ENCODE measurements at regions of chr1 and their contacts with region 1.

Region 1: DNA sequence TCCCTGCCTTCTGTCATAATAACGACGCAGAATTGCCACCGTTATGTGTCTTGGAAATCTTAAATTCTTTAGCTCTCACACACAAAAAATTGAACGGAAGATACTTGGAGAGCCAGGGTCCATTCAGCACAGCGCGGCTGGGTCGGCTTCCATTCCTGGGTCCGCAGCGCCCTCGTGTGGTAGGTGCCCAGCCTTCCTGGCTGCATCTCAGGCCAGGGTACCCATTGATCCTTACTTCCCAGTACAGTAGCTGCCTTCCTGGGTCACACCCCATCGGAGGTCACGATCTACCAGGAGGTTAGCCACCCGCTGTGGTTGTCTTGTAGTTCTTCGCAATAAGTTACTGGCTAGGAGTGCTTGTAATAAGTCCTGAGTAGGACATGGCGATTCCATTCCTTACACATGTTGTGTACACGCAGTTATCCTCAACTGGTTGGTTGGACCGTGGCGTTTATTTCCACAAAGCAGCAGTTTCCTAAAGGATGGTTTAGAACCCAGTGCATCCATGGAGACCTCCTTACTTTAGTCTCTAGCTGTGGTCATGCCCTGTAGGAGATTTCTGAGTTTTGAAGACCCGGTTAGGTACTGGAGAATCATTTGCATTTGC is 9.9 kb upstream of the MTARC1 start:
- DNase-seq: peak; percentile 97
- H3K27ac ChIP-seq: no peak overlapping the region
- CTCF ChIP-seq: peak; percentile 87

Region 2: DNA sequence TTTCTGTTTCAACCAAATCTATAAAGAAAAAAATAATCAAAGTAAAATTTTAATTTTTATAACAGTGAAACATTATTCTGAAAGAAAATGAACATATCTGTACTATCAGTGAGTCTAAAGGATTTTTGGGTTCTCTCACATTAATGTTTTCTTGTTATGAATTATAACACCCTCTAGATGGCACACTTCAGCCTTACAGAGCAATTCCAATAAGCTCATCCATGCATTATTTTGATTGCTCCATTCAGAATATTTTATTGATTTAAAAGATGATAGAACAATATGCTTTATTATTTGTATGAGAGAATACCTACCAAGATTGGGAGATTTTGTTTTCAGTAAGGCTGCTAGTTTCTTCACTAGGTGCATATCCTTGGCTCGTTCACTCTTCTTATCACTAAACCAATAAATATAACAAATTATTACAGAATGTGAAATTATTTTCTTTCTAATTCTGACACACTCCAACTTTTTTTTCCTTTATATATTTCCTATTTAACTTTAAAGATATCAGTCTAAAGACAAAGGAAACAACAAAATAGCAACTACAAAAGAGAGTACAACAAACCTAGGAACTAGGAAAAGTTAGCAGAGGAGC is 587.0 kb before region 1 on chr1:
- CTCF ChIA-PET with region 1: interaction called, 10 read pairs
- POLR2A ChIA-PET with region 1: no interaction called
- DNase-seq: peak; percentile 53
- H3K27ac ChIP-seq: no peak overlapping the region
- CTCF ChIP-seq: peak; percentile 59

Region 3: GRCh38 chr1:220592714-220593113 is 184.1 kb before region 1 on chr1:
- CTCF ChIA-PET with region 1: no interaction called
- POLR2A ChIA-PET with region 1: no interaction called
- DNase-seq: no peak
- H3K27ac ChIP-seq: no peak overlapping the region
- CTCF ChIP-seq: no peak

Measured in RWPE1 (cell line).